MCF 10A (cell line): ENCODE measurements at regions of chr9 and their contacts with region 1.

Region 1: GRCh38 chr9:83937911-83938323 is 16.7 kb upstream of the KIF27 start:
- DNase-seq: peak; percentile 83
- H3K4me3 Mint-ChIP-seq: no peak overlapping the region
- H3K27ac Mint-ChIP-seq: no peak overlapping the region
- H3K4me1 Mint-ChIP-seq: peaks cover 41% of the 10 kb centered on the region
- H3K27me3 Mint-ChIP-seq: no peaks in the 10 kb centered on the region
- CTCF ChIP-seq: peak; percentile 67

Region 2: GRCh38 chr9:83701769-83702168 is 236.1 kb before region 1 on chr9:
- CTCF ChIA-PET with region 1: no interaction called
- POLR2A ChIA-PET with region 1: no interaction called
- intact Hi-C with region 1: no loop called
- DNase-seq: peak; percentile 78
- H3K4me3 Mint-ChIP-seq: peak overlapping the region; percentile 64
- H3K27ac Mint-ChIP-seq: peak overlapping the region; percentile 84
- H3K4me1 Mint-ChIP-seq: peaks cover 39% of the 10 kb centered on the region
- H3K27me3 Mint-ChIP-seq: no peaks in the 10 kb centered on the region
- CTCF ChIP-seq: no peak

Region 3: DNA sequence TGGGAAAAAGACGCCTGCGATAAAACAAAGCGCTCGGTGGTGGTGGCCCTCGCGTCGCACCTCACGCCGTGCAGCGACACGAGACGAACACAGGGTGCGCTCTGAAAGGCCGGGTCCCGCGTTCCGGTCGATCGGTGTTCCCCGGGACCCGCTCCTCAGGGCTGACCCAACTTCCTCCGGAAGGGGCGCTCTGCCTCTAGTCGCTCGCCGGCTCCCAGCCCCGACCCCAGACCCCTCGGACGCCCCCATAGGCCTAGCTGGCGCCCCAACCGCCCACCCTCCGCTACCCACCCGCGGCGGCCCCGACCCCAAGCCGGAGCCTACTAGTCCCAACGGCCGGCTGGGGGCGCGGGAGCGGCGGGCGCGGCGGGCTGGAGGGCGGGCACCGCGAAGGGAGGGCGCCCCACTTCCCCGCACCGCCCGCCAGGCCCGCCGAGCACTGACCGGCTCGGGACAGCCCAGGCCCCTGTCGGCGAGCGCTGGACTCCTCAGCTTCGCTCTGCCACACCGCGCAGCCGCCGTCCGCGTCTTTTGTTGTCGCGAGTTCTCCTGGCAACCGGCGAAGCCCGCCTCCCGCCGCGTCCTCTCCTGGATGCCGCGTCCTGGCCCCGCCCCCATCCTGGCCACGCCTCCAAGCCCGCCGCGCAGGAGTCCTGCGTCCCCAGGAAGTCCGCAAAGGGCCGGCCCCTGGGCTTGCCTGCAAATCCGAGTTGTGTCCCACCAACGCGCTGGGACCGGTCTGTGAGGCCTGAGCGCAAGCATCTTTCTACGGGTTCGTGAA is 16.8 kb before region 1 on chr9 and contains the start of gene KIF27:
- CTCF ChIA-PET with region 1: interaction called, 11 read pairs
- POLR2A ChIA-PET with region 1: interaction called, 79 read pairs
- intact Hi-C with region 1: loop called (anchors 1 kb)
- DNase-seq: peak; percentile 96
- H3K4me3 Mint-ChIP-seq: peak within 1 kb of the TSS; percentile 77
- H3K27ac Mint-ChIP-seq: peak within 1 kb of the TSS; percentile 92
- H3K4me1 Mint-ChIP-seq: peaks cover 10% of the 10 kb centered on the region
- H3K27me3 Mint-ChIP-seq: no peaks in the 10 kb centered on the region
- CTCF ChIP-seq: peak; percentile 11
- total RNA-seq, gene KIF27: 9.4 and 10.0 TPM in 2 replicates

Region 4: GRCh38 chr9:84371737-84372136 is 433.8 kb after region 1 on chr9:
- CTCF ChIA-PET with region 1: no interaction called
- POLR2A ChIA-PET with region 1: no interaction called
- intact Hi-C with region 1: loop called (anchors 5 kb)
- DNase-seq: peak; percentile 97
- H3K4me3 Mint-ChIP-seq: peak overlapping the region; percentile 24
- H3K27ac Mint-ChIP-seq: peak overlapping the region; percentile 6
- H3K4me1 Mint-ChIP-seq: peaks cover 31% of the 10 kb centered on the region
- H3K27me3 Mint-ChIP-seq: no peaks in the 10 kb centered on the region
- CTCF ChIP-seq: no peak

Region 5: DNA sequence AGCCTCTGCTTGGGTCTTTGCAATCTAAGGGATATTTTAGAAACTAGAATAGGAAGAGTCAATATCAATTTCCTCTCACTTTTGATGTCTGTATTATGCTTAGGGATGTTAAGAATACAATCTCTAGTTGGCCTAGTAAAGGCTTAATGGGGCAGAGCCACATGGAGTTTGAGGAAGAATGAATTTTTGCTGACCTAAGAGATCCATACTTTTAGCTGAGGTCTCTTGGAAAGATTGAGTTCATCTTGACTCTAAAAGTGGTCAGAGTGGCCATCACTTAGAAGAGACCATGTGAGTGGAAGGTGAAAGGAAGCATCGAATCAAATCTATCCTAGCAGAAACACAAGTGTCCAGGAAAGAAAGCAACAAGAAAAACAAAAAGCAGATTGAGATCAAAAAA is 494.8 kb after region 1 on chr9:
- CTCF ChIA-PET with region 1: no interaction called
- POLR2A ChIA-PET with region 1: no interaction called
- intact Hi-C with region 1: no loop called
- DNase-seq: no peak
- H3K4me3 Mint-ChIP-seq: no peak overlapping the region
- H3K27ac Mint-ChIP-seq: no peak overlapping the region
- H3K4me1 Mint-ChIP-seq: no peaks in the 10 kb centered on the region
- H3K27me3 Mint-ChIP-seq: no peaks in the 10 kb centered on the region
- CTCF ChIP-seq: no peak